Esophagus muscularis mucosa (tissue), 4 donors: ENCODE measurements at regions of chr10 and their contacts with region 1.

Region 1: GRCh38 chr10:44386546-44387052 is 1.7 kb upstream of the CXCL12 start:
- DNase-seq: no peak
- H3K4me3 ChIP-seq: peak overlapping the region in 1 of 4 donors; percentile 17
- H3K27ac ChIP-seq: peak overlapping the region in 1 of 4 donors; percentile 78
- H3K4me1 ChIP-seq: peaks cover 4 to 49% (median 44%) of the 10 kb centered on the region in 4 donors
- H3K27me3 ChIP-seq: peaks cover 0 to 44% (median 2%) of the 10 kb centered on the region in 4 donors
- CTCF ChIP-seq: peak; percentile 77 to 92 (median 85)
- EP300 ChIP-seq: no peak
- POLR2A ChIP-seq: no peak

Region 2: DNA sequence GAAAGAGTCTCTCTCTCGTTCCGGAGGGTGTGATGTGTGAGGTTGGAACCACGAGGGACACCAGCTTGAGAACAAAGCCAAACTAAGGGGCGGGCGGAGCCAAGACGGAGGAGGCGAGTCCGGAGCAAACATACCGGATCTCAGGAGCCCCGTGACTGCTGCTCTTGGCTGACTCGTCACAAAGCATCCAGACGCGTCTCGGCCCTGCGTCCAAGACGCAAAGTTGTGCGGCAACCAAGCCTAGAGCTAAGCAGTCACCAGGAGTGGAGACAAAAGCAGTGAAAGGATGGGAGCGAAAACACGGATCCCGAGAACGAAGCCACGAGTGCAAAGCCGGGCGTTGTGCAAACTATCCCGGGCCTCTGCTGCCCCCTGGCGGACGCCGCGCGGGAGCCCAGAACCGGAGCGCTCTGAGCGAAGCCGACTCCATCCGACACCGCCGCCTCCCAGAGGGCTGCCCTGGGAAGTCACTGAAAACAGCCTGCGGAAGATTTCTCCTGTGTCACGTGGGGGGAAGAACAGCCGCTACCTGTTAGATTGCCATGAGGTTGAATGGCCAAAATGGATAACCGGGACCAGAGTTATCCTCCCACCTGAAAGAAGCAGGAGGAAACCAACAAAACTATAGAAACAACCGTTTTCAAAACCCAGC is 478.2 kb after region 1 on chr10:
- intact Hi-C with region 1: loop called (anchors 5 kb)
- DNase-seq: peak; percentile 98
- H3K4me3 ChIP-seq: peak overlapping the region; percentile 54 to 68 (median 60)
- H3K27ac ChIP-seq: peak overlapping the region; percentile 73 to 81 (median 80)
- H3K4me1 ChIP-seq: peaks cover 8 to 24% (median 20%) of the 10 kb centered on the region in 4 donors
- H3K27me3 ChIP-seq: no peaks in the 10 kb centered on the region
- CTCF ChIP-seq: peak; percentile 92 to 99 (median 99)
- EP300 ChIP-seq: no peak
- POLR2A ChIP-seq: no peak